ENCODE measurements at regions of chr10 and their contacts with region 1.

Region 1: DNA sequence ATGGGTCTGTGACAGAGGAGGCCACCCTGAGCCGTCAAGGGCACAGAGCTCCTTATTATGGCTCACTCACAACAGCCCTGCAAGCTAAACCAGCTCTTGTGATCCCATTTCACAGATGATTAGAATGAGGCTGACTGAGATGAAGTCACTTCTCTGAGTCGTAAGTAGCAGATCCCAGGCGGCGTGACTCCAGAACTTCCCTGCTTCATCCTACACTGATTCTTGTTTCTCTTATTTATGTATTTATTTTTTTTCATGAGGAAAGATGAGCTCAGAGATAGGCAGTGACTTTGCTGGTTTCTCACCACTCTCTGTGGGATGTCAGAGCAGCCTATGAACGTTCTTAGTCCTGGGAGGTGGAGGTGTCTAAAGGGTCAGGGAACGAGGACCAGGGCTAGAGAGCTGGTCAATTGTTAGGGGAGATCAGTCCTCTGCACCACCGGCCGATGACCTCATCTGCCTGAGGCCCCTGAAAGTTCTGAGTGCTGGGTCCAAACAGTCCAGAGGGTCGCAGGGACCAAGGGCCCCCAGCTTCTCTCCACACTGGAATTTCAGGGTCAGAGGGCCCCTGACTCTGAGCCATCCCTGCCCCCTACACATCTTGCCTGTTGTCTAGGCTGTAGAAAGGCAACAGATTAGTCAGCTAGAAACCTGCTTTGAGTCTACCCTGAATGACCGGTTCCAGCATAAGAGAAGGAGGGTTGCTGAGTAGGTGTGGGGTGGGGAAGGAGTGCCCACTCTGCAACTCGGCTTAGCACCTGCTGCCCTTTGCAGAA is 17.9 kb downstream of the CLRN3 start:
- DNase-seq: peak; percentile 66

Region 2: DNA sequence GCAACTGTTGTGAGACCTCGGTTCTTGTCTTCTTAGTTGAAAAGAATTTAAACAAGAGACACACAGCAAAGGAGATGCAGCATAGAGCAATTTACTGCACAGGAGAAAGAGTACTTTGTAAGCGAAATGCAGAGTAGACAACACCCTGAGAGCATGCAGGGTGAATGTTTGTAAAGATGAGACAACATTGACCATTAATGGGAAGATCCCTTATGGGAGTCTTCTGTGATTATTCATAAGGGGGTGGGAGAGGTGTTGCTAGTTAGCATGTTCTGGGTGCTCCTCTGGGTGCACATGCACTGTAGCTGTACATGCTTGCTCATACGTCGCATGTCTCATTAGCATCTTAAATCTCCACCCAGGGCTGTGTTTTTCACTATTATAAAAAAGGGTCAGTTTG is 44.4 kb before region 1 on chr10:
- intact Hi-C with region 1: loop called in 1 of 2 experiments (anchors 1 kb)
- DNase-seq: no peak